WTC11 (cell line): ENCODE measurements at regions of chr6 and their contacts with region 1.

Region 1: GRCh38 chr6:16964553-16965501 is 137.0 kb upstream of the STMND1 start:
- DNase-seq: peak; percentile 85
- ATAC-seq: peak; percentile 99
- H3K4me3 Mint-ChIP-seq: peak overlapping the region; percentile 4; the same call in 1 of the 2 replicates
- H3K27ac Mint-ChIP-seq: no peak overlapping the region
- H3K4me1 Mint-ChIP-seq: peaks cover 9% of the 10 kb centered on the region
- H3K27me3 Mint-ChIP-seq: no peaks in the 10 kb centered on the region
- CTCF ChIP-seq: peak; percentile 82

Region 2: GRCh38 chr6:16761471-16762267 is 203.2 kb before region 1 on chr6:
- CTCF ChIA-PET with region 1: interaction called, 18 read pairs
- POLR2A ChIA-PET with region 1: no interaction called
- DNase-seq: peak; percentile 87
- ATAC-seq: peak; percentile 56
- H3K4me3 Mint-ChIP-seq: peak overlapping the region; percentile 96
- H3K27ac Mint-ChIP-seq: no peak overlapping the region
- H3K4me1 Mint-ChIP-seq: peaks cover 30% of the 10 kb centered on the region
- H3K27me3 Mint-ChIP-seq: peaks cover 26% of the 10 kb centered on the region
- CTCF ChIP-seq: no peak

Region 3: DNA sequence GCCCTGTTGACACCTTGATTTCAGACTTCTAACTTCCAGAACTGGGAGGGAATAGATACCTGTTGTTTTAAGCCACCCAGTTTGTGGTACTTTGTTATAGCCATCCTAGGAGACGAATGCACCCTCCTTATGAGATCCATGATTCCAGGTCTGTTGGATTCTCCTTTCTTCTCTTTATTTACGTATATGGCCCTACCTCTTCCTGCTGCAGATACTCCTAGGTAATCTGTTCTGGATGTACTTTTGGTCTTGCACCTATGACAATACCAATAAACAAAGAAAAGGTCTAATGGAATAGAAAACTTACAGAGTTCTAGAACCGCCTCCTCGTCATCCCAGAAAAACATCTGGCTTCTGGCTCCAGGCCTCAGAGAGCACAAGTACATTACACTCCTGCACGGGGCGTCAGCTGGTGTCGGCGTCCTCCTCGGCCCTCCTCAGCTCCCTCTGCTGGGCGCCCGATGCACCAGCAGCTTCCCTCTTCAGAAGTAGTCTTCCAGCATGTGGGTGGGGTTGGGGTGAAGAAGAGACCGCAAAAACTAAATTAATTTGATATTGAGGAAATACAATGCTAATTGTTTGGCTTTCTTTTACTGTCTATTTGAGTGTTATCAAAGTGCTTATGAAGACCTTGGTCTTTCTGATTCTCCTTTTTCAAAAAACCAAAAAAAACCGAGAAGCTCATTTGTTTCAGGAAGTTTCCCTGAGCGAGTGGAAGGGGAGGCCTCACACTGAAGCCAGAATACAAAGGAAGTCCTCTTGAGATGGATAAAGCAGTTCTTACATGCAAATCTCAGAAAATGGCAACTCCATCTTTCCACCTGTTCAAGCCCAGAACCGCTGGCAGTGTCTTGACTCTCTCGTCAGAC is 193.9 kb before region 1 on chr6:
- CTCF ChIA-PET with region 1: interaction called, 15 read pairs
- POLR2A ChIA-PET with region 1: interaction called, 3 read pairs
- DNase-seq: peak; percentile 81
- ATAC-seq: peak; percentile 97
- H3K4me3 Mint-ChIP-seq: no peak overlapping the region
- H3K27ac Mint-ChIP-seq: no peak overlapping the region
- H3K4me1 Mint-ChIP-seq: peaks cover 23% of the 10 kb centered on the region
- H3K27me3 Mint-ChIP-seq: peaks cover 3% of the 10 kb centered on the region
- CTCF ChIP-seq: peak; percentile 85

Region 4: GRCh38 chr6:16803294-16804200 is 161.3 kb before region 1 on chr6:
- CTCF ChIA-PET with region 1: interaction called, 10 read pairs
- POLR2A ChIA-PET with region 1: no interaction called
- DNase-seq: peak; percentile 73
- ATAC-seq: peak; percentile 96
- H3K4me3 Mint-ChIP-seq: peak overlapping the region; percentile 67
- H3K27ac Mint-ChIP-seq: peak overlapping the region; percentile 62
- H3K4me1 Mint-ChIP-seq: peaks cover 35% of the 10 kb centered on the region
- H3K27me3 Mint-ChIP-seq: no peaks in the 10 kb centered on the region
- CTCF ChIP-seq: no peak